ENCODE measurements at regions of chr9 and their contacts with region 1.

Region 1: GRCh38 chr9:125521462-125522327 is 185.3 kb downstream of the MAPKAP1 start:
- DNase-seq: peak; percentile 84
- H3K4me3 Mint-ChIP-seq: peak overlapping the region; percentile 78
- H3K27ac Mint-ChIP-seq: peak overlapping the region; percentile 95
- H3K4me1 Mint-ChIP-seq: peaks cover 41% of the 10 kb centered on the region
- H3K27me3 Mint-ChIP-seq: no peaks in the 10 kb centered on the region

Region 2: GRCh38 chr9:124011420-124012301 is 1510.0 kb before region 1 on chr9 and contains the start of gene LHX2:
- intact Hi-C with region 1: no loop called
- DNase-seq: peak; percentile 72
- H3K4me3 Mint-ChIP-seq: no peak within 1 kb of the TSS
- H3K27ac Mint-ChIP-seq: peak within 1 kb of the TSS; percentile 78
- H3K4me1 Mint-ChIP-seq: peaks cover 10% of the 10 kb centered on the region
- H3K27me3 Mint-ChIP-seq: peaks cover 64% of the 10 kb centered on the region
- total RNA-seq, gene LHX2: not detected in 2 replicates

Region 3: DNA sequence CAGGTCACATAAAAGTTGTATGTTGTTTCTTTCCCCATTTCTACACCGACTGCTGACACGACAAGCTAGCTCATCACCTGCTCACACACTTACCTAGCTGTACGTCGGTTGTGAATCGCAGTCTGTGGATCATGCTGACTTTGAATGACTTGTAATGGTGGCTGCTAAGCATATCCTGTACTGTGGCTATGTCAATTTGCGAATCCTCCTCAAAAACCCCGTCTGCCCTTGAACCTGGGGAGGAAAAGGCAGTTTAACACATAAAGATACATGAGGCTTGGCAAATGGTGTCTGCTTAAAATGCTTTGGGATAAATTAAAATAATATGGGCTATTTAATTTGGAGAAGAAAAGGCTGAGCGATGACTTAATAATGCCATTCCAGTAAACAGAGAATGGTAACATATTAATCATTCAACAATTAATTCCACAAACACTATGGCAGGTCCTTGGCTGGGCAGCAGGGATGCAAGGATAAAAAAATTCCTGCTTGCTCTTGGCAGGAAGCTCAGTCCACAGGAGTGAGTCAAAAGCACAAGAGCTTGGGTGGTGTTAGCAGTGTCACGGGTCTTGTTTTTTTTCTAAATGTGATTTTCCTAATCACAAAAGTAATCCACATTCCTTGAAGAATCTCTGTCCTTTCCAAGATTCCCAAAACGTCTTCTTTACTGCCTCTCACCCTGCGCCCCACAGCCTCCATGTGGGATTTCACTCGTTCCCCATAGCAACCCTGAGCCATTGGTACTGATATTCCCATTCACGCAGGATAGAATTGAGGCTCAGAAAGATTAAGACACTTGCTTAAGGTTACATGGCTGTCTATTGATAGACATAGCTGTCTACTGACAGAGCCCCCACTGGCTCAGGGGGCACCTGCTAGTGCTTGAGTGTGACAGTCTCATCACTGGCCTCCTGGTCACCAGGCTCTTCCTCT is 37.1 kb before region 1 on chr9:
- intact Hi-C with region 1: no loop called
- DNase-seq: no peak
- H3K4me3 Mint-ChIP-seq: no peak overlapping the region
- H3K27ac Mint-ChIP-seq: no peak overlapping the region
- H3K4me1 Mint-ChIP-seq: no peaks in the 10 kb centered on the region
- H3K27me3 Mint-ChIP-seq: no peaks in the 10 kb centered on the region

Region 4: GRCh38 chr9:125558453-125559092 is 36.9 kb after region 1 on chr9:
- intact Hi-C with region 1: loop called (anchors 1 kb)
- DNase-seq: peak; percentile 86
- H3K4me3 Mint-ChIP-seq: no peak overlapping the region
- H3K27ac Mint-ChIP-seq: no peak overlapping the region
- H3K4me1 Mint-ChIP-seq: peaks cover 19% of the 10 kb centered on the region
- H3K27me3 Mint-ChIP-seq: no peaks in the 10 kb centered on the region

Region 5: GRCh38 chr9:125593585-125594229 is 72.0 kb after region 1 on chr9:
- intact Hi-C with region 1: no loop called
- DNase-seq: no peak
- H3K4me3 Mint-ChIP-seq: no peak overlapping the region
- H3K27ac Mint-ChIP-seq: no peak overlapping the region
- H3K4me1 Mint-ChIP-seq: peaks cover 12% of the 10 kb centered on the region
- H3K27me3 Mint-ChIP-seq: no peaks in the 10 kb centered on the region

Region 6: GRCh38 chr9:125650271-125650737 is 128.6 kb after region 1 on chr9:
- intact Hi-C with region 1: loop called (anchors 5 kb)
- DNase-seq: peak; percentile 61
- H3K4me3 Mint-ChIP-seq: peak overlapping the region; percentile 48
- H3K27ac Mint-ChIP-seq: peak overlapping the region; percentile 86
- H3K4me1 Mint-ChIP-seq: peaks cover 49% of the 10 kb centered on the region
- H3K27me3 Mint-ChIP-seq: no peaks in the 10 kb centered on the region

Region 7: GRCh38 chr9:125785248-125785751 is 263.6 kb after region 1 on chr9:
- intact Hi-C with region 1: no loop called
- DNase-seq: no peak
- H3K4me3 Mint-ChIP-seq: peak overlapping the region; percentile 6
- H3K27ac Mint-ChIP-seq: peak overlapping the region; percentile 69
- H3K4me1 Mint-ChIP-seq: peaks cover 19% of the 10 kb centered on the region
- H3K27me3 Mint-ChIP-seq: no peaks in the 10 kb centered on the region

Region 8: DNA sequence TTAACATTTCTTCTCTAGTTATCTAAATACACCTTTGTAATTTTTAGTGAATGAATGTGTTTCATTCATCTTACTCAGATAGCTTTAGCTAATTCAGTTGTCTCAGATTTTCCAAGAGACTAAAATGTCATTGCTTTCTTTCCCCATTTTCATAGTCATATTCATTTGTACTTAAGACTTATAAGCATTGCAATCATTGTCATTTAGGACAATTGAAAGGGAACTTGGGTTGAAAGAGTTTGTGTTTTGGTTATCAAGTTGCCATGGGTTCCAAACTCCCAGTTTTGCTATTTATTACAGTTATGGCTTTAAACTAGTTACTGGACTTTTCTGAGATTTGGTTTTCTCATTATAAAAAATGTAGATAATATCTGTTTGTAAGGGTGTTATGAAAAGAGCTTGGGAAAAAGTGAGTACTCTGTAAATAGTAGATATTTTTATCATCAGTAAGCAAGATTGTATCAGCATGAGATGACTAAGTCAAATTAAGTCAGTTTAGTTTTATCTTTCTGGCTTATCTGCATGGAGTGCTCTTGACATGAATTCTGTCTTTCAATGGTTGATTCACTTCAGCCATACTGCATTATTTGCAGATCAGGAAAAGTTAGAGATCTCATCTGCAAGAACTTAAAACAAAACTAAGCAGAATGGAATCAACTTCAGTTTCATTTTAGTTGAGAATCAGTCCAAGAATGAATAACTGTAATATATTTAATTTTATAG is 333.0 kb after region 1 on chr9:
- intact Hi-C with region 1: loop called (anchors 10 kb)
- DNase-seq: no peak
- H3K4me3 Mint-ChIP-seq: no peak overlapping the region
- H3K27ac Mint-ChIP-seq: peak overlapping the region; percentile 64
- H3K4me1 Mint-ChIP-seq: peaks cover 7% of the 10 kb centered on the region
- H3K27me3 Mint-ChIP-seq: no peaks in the 10 kb centered on the region

Region 9: DNA sequence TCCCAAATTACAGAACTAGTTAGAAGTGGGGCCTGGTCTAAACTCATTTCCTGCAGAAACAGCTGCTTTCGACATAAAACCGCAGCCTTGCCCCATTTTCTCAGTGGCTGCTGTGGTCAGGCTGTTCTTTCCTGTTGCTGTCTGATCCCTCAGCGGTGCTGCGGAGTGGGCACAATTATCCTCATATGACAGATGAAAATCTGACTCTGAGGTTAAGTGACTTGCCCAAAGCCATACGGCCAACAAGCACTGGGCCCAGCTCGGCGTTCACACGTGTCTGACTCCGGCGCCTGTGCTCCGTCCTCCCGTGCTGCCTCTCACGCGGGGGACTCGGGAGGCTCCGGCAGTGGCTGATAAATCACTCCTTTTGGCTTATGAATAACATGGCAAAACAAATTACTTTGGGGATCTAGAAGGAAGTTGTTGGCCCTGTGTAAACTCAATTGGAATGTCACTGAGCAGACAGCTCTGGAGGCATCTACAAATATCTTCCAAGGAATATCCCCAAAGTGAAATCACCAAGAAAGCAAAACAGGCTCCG is 949.5 kb after region 1 on chr9:
- intact Hi-C with region 1: loop called (anchors 5 kb)
- DNase-seq: peak; percentile 94
- H3K4me3 Mint-ChIP-seq: peak overlapping the region; percentile 64
- H3K27ac Mint-ChIP-seq: peak overlapping the region; percentile 78
- H3K4me1 Mint-ChIP-seq: peaks cover 47% of the 10 kb centered on the region
- H3K27me3 Mint-ChIP-seq: peaks cover 52% of the 10 kb centered on the region